ENCODE measurements at regions of chr21 and their contacts with region 1.

Region 1: DNA sequence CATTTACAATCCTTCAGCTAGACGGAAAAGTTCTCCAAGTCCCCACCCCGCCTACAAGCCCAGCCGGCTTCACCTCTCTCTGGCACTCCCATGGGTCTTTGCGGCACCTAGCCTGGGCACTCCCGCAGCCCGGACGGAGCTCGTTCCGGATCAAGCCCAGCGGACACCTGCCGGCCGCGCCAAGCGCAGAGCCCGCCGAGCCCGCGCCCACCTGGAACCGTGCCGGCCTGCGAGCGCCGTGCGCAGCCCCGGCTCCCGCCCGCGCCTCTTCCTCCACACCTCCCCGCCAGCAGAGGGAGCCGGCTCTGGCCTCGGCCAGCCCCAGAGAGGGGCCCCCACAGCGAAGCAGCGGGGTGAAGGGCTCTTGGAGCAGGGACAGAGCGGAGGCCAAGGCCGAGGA is 50.0 kb upstream of the KRTAP19-8 start:
- DNase-seq: no peak

Region 2: DNA sequence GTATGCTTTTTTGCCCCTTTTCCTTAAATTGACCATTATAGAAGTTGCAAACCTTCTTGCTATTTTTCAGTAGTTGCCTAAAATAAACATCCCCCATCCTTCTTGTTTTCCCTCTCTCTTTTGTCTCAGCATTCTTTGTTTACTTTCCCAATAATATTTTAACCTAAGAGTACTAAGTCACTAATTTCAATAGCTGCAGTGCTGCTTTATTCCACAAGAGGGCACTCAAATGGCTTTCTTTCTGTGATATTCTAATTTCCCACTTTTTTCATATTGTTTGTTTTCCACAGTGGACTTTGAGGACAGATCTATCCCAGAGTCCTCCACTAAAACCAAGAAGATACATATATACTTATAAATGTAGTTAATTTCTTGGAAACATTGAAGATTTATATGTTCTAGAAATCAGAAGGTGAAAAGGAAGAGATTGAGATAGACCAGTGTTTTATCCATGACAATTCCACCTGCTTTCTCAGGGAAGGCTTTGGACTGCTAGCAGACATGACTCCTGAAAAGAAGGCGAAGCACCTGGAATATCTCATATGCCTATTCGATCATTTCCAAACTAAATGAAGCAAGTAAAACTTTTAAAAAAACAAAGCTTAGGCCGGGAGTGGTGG is 1043.8 kb before region 1 on chr21:
- intact Hi-C with region 1: loop called (anchors 10 kb)
- DNase-seq: peak in 13 of 42 donors; percentile 6 to 68 (median 31)